Activated B cell treated with CpG ODN at 0.5 μM for 24 hours (primary cell): ENCODE measurements at regions of chr2 and their contacts with region 1.

Region 1: DNA sequence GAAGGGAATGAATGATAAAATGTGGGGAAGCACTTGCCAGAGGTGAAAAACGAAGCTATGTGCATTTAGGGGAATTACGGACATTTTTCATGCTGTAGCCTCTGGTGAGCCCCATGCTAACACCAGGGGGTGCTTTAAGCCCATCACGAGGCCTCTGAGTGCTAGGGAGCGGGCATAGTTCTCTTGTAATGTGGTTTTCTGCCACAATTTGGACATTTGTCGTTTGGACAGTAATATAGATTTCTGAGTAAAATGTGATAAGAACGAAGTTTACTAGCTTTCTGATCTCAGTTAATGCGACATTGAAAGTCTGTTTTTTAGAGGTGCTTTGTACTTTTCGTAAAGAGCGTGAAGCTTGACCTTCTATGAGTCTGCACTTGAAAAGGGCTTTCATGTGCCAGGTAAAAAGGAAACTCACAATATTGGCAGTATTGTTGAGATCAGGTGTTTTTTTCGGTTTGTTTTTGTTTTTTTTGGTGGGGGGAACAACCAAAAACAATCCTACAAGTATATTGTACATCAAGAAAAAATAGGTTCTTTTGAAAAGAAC is 50.6 kb downstream of the TRAF3IP1 start:
- DNase-seq: no peak
- ATAC-seq: peak; percentile 66
- H3K4me3 Mint-ChIP-seq: no peak overlapping the region
- H3K27ac Mint-ChIP-seq: no peak overlapping the region
- H3K4me1 Mint-ChIP-seq: no peaks in the 10 kb centered on the region
- H3K27me3 Mint-ChIP-seq: no peaks in the 10 kb centered on the region
- CTCF ChIP-seq: no peak

Region 2: DNA sequence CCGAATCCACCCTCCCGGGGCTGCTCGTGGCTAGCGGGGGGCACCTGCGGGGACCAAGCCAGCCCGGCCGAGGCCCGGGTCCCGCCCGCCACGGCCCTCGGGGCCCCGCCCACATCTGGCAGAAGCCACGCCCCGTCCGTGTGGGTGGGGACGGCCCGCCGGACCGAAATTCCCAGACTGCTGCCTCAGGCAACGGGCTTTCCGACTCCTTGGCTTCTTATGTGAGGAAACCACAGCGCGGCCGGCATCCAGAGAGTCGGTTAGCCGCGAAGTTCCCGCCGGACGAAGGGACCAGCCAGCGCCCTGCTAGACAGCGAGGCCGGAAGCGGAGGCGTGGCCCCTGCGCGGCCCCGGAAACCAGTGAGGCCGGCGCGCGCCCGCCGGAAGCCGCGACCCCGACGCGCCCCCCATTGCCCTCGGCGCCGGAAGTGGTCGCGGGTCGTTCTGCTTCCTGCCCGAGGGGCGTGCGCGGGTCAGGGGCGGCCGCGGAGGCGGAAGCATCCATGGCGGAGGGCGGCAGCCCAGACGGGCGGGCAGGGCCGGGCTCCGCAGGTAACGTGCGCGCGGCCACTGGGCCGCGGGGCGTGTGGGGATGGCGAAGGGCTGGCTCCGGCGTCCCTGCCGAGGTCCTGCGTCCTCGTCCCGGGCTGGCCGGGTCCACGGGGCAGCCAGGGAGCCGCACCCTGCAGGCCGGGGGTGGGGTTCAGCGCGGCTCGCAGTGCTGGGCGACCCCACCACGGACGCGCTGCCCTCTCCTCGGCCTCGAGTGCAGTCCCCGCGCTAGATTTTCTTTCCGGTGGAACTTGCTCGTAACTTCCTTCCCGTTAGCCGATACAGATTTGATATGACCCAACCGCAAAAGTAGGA is 55.9 kb after region 1 on chr2 and contains the start of gene ASB1:
- CTCF ChIA-PET with region 1: no interaction called
- POLR2A ChIA-PET with region 1: no interaction called
- intact Hi-C with region 1: loop called (anchors 2 kb)
- DNase-seq: peak; percentile 84
- ATAC-seq: peak; percentile 86
- H3K4me3 Mint-ChIP-seq: peak within 1 kb of the TSS; percentile 92
- H3K27ac Mint-ChIP-seq: peak within 1 kb of the TSS; percentile 94
- H3K4me1 Mint-ChIP-seq: peaks cover 39% of the 10 kb centered on the region
- H3K27me3 Mint-ChIP-seq: no peaks in the 10 kb centered on the region
- CTCF ChIP-seq: no peak
- total RNA-seq, gene ASB1: 44.5 and 49.8 TPM in 2 replicates

Region 3: GRCh38 chr2:238462782-238463396 is 92.0 kb after region 1 on chr2:
- CTCF ChIA-PET with region 1: interaction called, 3 read pairs
- POLR2A ChIA-PET with region 1: no interaction called
- intact Hi-C with region 1: loop called (anchors 1 kb)
- DNase-seq: no peak
- ATAC-seq: peak; percentile 40
- H3K4me3 Mint-ChIP-seq: no peak overlapping the region
- H3K27ac Mint-ChIP-seq: no peak overlapping the region
- H3K4me1 Mint-ChIP-seq: peaks cover 5% of the 10 kb centered on the region
- H3K27me3 Mint-ChIP-seq: no peaks in the 10 kb centered on the region
- CTCF ChIP-seq: peak; percentile 48

Region 4: DNA sequence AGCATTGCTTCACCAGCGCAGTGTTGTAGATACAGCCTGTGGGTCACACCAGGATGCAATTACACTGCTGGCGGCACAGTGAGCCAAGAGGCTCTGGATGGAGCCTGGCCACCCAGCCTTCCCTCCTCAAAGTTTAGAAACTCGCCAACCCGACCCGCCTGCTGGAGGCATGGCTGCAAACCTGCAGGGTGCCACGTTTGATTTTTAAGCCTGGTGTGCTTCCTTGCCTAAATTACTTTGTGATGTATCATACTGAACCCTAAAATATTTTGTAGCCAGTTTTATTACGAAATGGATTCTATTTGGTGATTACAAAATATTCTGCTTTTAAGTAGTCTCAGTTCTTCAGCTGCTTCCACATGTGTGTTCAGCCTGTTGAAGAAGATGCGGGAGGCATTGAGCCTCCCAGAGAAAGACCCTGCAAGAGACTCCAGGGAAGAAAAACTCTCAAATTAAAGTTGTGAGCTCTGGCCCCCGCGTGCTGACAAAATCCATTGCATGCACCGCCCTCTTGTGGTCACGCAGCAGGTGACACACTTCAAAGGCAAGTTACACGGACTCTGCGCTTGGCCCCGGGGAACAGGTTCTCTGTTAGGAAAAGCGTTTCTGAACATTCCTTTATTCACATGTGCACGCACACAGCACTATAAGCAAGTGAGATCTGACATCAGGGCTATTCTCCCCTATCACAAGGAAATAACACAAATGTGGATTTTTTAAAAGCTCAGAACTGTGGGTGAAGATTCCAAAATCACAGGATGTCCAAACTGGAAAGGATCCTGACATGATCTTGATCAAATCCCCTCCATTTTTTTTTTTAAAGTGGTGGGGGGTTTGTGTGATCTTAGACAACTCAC is 414.0 kb after region 1 on chr2:
- CTCF ChIA-PET with region 1: interaction called, 19 read pairs
- POLR2A ChIA-PET with region 1: no interaction called
- intact Hi-C with region 1: loop called (anchors 1 kb)
- DNase-seq: no peak
- ATAC-seq: no peak
- H3K4me3 Mint-ChIP-seq: no peak overlapping the region
- H3K27ac Mint-ChIP-seq: no peak overlapping the region
- H3K4me1 Mint-ChIP-seq: no peaks in the 10 kb centered on the region
- H3K27me3 Mint-ChIP-seq: peaks cover 2% of the 10 kb centered on the region
- CTCF ChIP-seq: no peak